ENCODE measurements at regions of chr3 and their contacts with region 1.

Region 1: GRCh38 chr3:161423911-161424522 is 52.7 kb upstream of the SPTSSB start:
- DNase-seq: no peak
- H3K4me3 ChIP-seq: no peak overlapping the region
- H3K27ac ChIP-seq: no peak overlapping the region
- H3K4me1 ChIP-seq: no peaks in the 10 kb centered on the region
- H3K27me3 ChIP-seq: no peaks in the 10 kb centered on the region
- CTCF ChIP-seq: peak; percentile 28 to 76 (median 55)
- EP300 ChIP-seq: no peak
- POLR2A ChIP-seq: no peak

Region 2: DNA sequence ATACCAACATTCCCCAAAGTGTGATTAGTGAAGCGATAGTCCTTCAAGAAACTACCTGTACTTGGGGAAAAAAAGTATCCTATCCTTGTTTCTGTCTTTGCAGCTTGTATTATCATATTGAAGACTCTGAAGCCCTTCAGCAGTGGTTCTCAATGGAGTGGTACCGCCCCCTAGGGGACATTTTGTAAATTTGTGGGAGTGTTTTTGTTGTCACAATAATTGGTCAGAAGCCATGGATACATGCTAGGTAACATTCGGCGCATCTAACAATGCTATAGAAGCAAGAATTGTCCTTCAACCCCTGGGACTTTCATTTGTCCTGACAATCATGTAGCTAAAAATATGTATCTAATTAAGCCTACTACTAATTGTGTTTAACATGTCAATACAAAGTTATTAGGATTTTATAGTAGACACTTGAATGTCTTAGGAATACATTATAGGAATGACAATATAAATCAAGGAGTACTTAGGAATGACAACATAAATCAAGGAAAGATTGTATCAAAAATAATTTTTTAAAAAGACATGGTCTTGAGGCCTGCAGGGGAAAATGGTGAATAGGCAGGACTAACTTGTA is 149.2 kb before region 1 on chr3:
- intact Hi-C with region 1: loop called (anchors 2 kb)
- DNase-seq: no peak
- H3K4me3 ChIP-seq: no peak overlapping the region
- H3K27ac ChIP-seq: no peak overlapping the region
- H3K4me1 ChIP-seq: no peaks in the 10 kb centered on the region
- H3K27me3 ChIP-seq: no peaks in the 10 kb centered on the region
- CTCF ChIP-seq: no peak
- EP300 ChIP-seq: no peak
- POLR2A ChIP-seq: no peak

Region 3: GRCh38 chr3:161475901-161476300 is 51.9 kb after region 1 on chr3:
- intact Hi-C with region 1: no loop called
- DNase-seq: no peak
- H3K4me3 ChIP-seq: no peak overlapping the region
- H3K27ac ChIP-seq: no peak overlapping the region
- H3K4me1 ChIP-seq: no peaks in the 10 kb centered on the region
- H3K27me3 ChIP-seq: no peaks in the 10 kb centered on the region
- CTCF ChIP-seq: no peak
- EP300 ChIP-seq: no peak
- POLR2A ChIP-seq: no peak

Measured in sigmoid colon (tissue), 7 donors.